ENCODE measurements at regions of chr11 and their contacts with region 1.

Region 1: GRCh38 chr11:66126808-66127555 is 56.9 kb downstream of the PACS1 start:
- DNase-seq: peak; percentile 25 to 75 (median 59)
- ATAC-seq: peak; percentile 93 to 97 (median 96)
- H3K4me3 ChIP-seq: peak overlapping the region in 1 of 2 donors; percentile 23
- H3K4me3 Mint-ChIP-seq: peak overlapping the region; percentile 64 to 77 (median 72)
- H3K27ac ChIP-seq: peak overlapping the region; percentile 71
- H3K27ac Mint-ChIP-seq: peak overlapping the region; percentile 98
- H3K4me1 ChIP-seq: peaks cover 36 to 37% of the 10 kb centered on the region in 2 experiments
- H3K4me1 Mint-ChIP-seq: peaks cover 76 to 84% (median 82%) of the 10 kb centered on the region in 3 donors
- H3K27me3 ChIP-seq: no peaks in the 10 kb centered on the region
- H3K27me3 Mint-ChIP-seq: no peaks in the 10 kb centered on the region

Region 2: DNA sequence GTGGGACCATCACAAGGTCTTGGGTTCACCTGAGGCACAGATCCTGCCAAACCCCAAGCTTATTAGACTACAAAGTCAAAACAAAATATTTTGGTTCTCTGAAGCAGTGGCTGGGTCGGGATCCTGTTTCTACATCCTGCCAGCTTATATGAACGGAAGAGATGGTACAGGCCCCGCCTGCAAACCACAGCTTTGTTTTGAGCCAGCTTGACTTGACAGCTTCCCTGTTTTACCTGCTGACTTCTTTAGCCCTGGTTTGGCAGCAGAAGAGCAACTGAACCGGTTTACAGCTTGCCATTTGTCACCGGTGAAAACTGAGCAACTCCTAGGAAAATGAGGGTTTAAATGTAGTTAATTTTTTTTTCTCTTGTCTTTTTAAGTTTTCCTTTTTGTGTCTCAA is 45.5 kb before region 1 on chr11:
- CTCF ChIA-PET with region 1: interaction called in 1 of 2 experiments, 15 read pairs
- POLR2A ChIA-PET with region 1: interaction called in 1 of 2 experiments, 7 read pairs
- DNase-seq: peak; percentile 52 to 91 (median 83)
- ATAC-seq: peak; percentile 92 to 98 (median 94)
- H3K4me3 ChIP-seq: peak overlapping the region in 1 of 2 donors; percentile 26
- H3K4me3 Mint-ChIP-seq: peak overlapping the region; percentile 83 to 90 (median 85)
- H3K27ac ChIP-seq: peak overlapping the region; percentile 82
- H3K27ac Mint-ChIP-seq: peak overlapping the region; percentile 95 to 100
- H3K4me1 ChIP-seq: peaks cover 58 to 68% of the 10 kb centered on the region in 2 experiments
- H3K4me1 Mint-ChIP-seq: peaks cover 90 to 94% (median 92%) of the 10 kb centered on the region in 3 donors
- H3K27me3 ChIP-seq: no peaks in the 10 kb centered on the region
- H3K27me3 Mint-ChIP-seq: no peaks in the 10 kb centered on the region

Region 3: DNA sequence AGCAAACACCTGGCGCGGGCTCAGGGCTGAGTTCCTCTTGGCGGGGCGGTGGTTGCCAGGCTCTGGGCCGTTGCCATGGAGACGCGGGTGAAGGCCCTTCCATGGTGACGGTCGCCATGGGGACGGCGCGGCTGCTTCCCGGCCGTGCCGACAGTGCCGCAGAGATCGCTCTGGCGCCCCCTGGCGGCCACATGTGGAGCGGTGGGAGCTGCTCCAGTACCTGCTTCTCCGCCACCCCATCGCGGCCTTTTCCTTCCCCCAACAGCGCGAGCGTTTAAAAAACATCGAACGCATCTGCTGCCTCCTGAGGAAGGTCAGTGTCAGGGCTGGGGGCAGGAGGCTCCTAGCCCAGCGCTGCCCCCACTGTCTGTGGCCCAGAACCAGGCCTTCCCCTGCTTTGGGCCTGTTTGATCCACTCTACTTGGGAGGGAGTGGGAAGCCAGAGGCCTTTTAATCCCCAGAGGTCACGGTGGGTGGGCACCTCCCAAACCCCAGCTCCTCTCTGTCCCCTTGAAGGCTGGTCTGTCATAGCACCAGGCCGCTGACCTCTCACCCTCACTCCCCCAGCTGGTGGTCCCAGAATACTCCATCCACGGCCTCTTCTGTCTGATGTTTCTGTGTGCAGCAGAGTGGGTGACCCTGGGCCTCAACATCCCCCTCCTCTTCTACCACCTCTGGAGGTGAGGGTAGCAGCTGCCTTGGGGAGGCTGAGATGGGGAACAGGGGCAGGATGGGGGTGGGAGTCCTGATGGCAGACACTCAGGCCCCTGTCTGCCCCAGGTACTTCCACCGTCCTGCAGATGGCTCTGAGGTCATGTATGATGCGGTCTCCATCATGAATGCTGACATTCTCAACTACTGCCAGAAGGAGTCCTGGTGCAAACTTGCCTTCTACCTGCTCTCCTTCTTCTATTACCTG is 155.7 kb after region 1 on chr11:
- CTCF ChIA-PET with region 1: no interaction called
- POLR2A ChIA-PET with region 1: no interaction called
- DNase-seq: peak; percentile 95 to 100 (median 100)
- ATAC-seq: peak; percentile 80 to 89 (median 86)
- H3K4me3 ChIP-seq: no peak overlapping the region
- H3K4me3 Mint-ChIP-seq: peak overlapping the region in 1 of 3 donors; percentile 54
- H3K27ac ChIP-seq: peak overlapping the region; percentile 50
- H3K27ac Mint-ChIP-seq: peak overlapping the region; percentile 19 to 66
- H3K4me1 ChIP-seq: peaks cover 2 to 45% of the 10 kb centered on the region in 2 experiments
- H3K4me1 Mint-ChIP-seq: peaks cover 38 to 48% (median 42%) of the 10 kb centered on the region in 3 donors
- H3K27me3 ChIP-seq: peaks cover 0 to 12% of the 10 kb centered on the region in 2 experiments
- H3K27me3 Mint-ChIP-seq: no peaks in the 10 kb centered on the region

Measured in T-cell (primary cell).